ENCODE measurements at regions of chr20 and their contacts with region 1.

Region 1: GRCh38 chr20:38751360-38751976 is 3.2 kb downstream of the ACTR5 start:
- DNase-seq: peak; percentile 61
- CTCF ChIP-seq: peak; percentile 51

Region 2: GRCh38 chr20:38645980-38646858 is 105.2 kb before region 1 on chr20:
- in situ Hi-C with region 1: loop called (anchors 10 kb)
- DNase-seq: peak; percentile 94
- CTCF ChIP-seq: peak; percentile 97